ENCODE measurements at regions of chr1 and their contacts with region 1.

Region 1: GRCh38 chr1:61035880-61036279 is 46.5 kb upstream of the NFIA start:
- DNase-seq: no peak
- ATAC-seq: no peak
- H3K4me3 ChIP-seq: no peak overlapping the region
- H3K4me1 ChIP-seq: no peaks in the 10 kb centered on the region
- CTCF ChIP-seq: no peak

Region 2: DNA sequence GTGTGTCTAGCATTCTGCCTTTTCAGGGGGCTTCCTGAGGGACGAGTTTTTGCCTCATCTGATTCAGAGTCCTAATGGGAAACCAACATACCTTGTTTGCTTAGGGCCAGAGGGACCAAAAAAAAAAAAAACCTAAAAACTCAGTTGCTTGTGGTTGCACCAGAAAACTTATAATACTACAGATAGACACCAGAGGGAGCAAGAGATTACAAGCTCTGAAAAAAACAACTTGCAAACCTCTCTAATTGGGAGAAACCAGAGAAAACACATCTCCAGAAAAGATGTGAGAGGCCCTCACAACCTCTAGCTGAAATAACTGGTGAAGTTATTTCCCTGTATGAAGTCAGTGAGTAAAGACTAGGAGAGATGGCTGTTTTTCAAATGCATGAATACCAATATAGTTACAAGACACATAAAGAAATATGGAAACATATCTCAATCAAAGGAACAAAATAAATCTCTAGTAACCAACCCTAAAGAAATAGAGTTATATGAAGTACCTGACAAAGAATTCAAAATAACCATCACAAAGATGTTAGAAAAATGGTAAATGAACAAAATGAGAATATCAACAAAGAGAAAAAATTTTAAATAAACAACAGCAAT is 187.2 kb before region 1 on chr1:
- intact Hi-C with region 1: loop called in 1 of 2 experiments (anchors 5 kb)
- DNase-seq: no peak
- ATAC-seq: peak; percentile 38
- H3K4me3 ChIP-seq: no peak overlapping the region
- H3K4me1 ChIP-seq: no peaks in the 10 kb centered on the region
- CTCF ChIP-seq: no peak

Region 3: GRCh38 chr1:60969971-60970509 is 65.8 kb before region 1 on chr1:
- intact Hi-C with region 1: no loop called
- DNase-seq: no peak
- ATAC-seq: peak; percentile 45
- H3K4me3 ChIP-seq: no peak overlapping the region
- H3K4me1 ChIP-seq: no peaks in the 10 kb centered on the region
- CTCF ChIP-seq: no peak